Activated T-helper 1 cell treated with anti-CD3 and anti-CD28 coated beads, Interleukin-12 subunit alpha, Interleukin-12 subunit beta, Interleukin-2, Interleukin-4 antibody, amounts not matched to agents 30 ng/mL and 10 ng/mL and 1 ng/mL, durations not matched to agents 14 hours and 24 hours and 36 hours (primary cell): ENCODE measurements at regions of chr4 and their contacts with region 1.

Region 1: DNA sequence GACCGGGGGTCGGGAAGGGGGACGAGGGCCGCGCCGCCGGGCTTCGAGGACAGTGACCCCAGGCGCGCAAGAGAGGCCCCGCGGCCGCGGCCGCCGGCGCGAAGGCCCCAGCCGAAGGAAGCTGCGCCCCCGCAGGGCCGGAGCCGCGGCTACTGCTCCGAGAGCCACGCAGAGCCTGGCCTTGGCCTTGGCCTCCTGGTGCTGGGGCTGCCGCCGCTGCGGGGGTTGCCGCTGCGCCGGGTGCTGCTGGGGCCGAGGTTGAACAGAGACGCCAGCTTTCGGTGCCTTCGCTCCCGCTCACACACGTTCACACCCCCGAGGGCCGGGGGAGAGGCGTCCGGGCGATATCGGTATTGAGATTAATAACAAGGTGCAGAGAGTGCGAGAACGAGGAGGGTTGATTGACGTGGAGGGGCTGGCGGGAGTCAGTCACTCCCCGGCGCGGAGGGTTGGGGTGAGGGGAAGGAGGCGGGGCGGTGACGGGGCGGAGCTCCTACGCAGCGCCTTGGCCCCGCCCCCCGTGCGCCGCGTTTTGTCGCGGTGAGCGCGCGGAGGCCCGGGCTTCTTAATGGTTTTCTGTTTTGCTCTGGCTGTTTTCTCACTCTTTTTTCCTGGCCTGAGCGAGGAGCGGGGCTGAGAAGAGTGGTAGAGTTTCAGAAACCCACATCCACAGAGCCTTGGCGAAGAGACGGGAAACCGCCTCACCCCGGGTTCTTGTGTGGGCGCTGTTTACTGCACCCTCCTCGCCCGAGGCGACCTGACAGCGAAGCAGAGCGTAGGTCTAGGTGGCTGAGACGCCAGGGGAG is 878 bp upstream of the CNOT6L start:
- DNase-seq: peak; percentile 92
- H3K4me3 Mint-ChIP-seq: peak overlapping the region; percentile 91
- H3K27ac Mint-ChIP-seq: peak overlapping the region; percentile 99
- H3K4me1 Mint-ChIP-seq: peaks cover 47% of the 10 kb centered on the region
- H3K27me3 Mint-ChIP-seq: peaks cover 5% of the 10 kb centered on the region

Region 2: DNA sequence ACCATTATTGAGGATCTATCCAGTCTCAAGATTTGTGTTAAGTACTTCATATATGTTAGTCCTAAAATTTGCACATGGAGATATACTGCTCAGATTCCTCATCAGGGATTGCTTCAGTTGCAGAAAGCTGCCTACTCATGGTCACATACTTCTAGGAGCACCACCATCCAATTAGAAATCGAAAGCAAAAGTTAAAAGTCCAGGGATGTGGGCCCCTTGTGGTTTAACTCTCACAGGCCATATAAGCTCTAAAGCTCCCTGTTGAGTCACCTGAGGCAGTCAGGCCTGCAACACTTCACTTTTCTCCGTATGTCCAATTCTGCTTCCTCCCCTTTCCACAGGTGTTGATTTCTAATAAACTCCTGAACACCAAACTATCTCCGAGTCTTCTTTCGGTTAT is 85.1 kb before region 1 on chr4:
- intact Hi-C with region 1: loop called (anchors 1 kb)
- DNase-seq: peak; percentile 50
- H3K4me3 Mint-ChIP-seq: peak overlapping the region; percentile 67
- H3K27ac Mint-ChIP-seq: peak overlapping the region; percentile 49
- H3K4me1 Mint-ChIP-seq: peaks cover 79% of the 10 kb centered on the region
- H3K27me3 Mint-ChIP-seq: no peaks in the 10 kb centered on the region

Region 3: GRCh38 chr4:77800483-77801259 is 19.4 kb before region 1 on chr4:
- intact Hi-C with region 1: loop called (anchors 1 kb)
- DNase-seq: no peak
- H3K4me3 Mint-ChIP-seq: peak overlapping the region; percentile 48
- H3K27ac Mint-ChIP-seq: peak overlapping the region; percentile 69
- H3K4me1 Mint-ChIP-seq: peaks cover 38% of the 10 kb centered on the region
- H3K27me3 Mint-ChIP-seq: no peaks in the 10 kb centered on the region

Region 4: DNA sequence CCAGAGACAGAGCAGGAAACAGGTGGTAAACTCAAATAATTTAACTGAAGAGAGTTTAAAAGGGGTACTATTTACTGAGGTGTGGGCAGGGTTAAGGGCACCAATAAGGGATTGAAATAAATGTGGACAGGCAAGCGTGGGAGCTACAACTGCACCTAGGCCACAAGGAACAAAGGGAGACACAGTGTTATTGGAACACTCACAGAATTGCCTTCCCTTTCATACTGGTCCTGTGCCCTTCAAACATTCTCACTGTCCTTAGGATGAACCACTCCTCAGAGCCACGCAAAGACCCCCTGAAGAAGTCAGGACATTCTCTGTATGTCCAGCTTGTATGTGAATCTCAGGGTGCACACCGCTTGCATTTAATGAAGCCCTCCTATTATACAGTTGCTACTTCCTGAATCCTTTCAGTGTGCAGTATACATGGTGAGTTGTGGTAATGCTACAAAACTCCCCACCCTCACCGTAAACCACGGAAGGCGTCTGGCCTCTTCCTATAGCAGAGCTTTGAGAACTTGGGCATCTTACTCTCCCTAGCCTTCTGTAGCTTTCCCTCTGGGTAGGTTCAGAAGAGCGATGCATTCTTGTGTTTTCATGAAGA is 32.9 kb after region 1 on chr4:
- intact Hi-C with region 1: loop called (anchors 1 kb)
- DNase-seq: peak; percentile 72
- H3K4me3 Mint-ChIP-seq: peak overlapping the region; percentile 56
- H3K27ac Mint-ChIP-seq: peak overlapping the region; percentile 93
- H3K4me1 Mint-ChIP-seq: peaks cover 56% of the 10 kb centered on the region
- H3K27me3 Mint-ChIP-seq: no peaks in the 10 kb centered on the region

Region 5: GRCh38 chr4:77872723-77873445 is 52.8 kb after region 1 on chr4:
- intact Hi-C with region 1: no loop called
- DNase-seq: no peak
- H3K4me3 Mint-ChIP-seq: no peak overlapping the region
- H3K27ac Mint-ChIP-seq: no peak overlapping the region
- H3K4me1 Mint-ChIP-seq: peaks cover 13% of the 10 kb centered on the region
- H3K27me3 Mint-ChIP-seq: no peaks in the 10 kb centered on the region

Region 6: GRCh38 chr4:77952457-77952856 is 132.4 kb after region 1 on chr4:
- intact Hi-C with region 1: loop called (anchors 2 kb)
- DNase-seq: no peak
- H3K4me3 Mint-ChIP-seq: no peak overlapping the region
- H3K27ac Mint-ChIP-seq: no peak overlapping the region
- H3K4me1 Mint-ChIP-seq: peaks cover 6% of the 10 kb centered on the region
- H3K27me3 Mint-ChIP-seq: peaks cover 1% of the 10 kb centered on the region